Activated CD8-positive, alpha-beta T cell treated with anti-CD3 and anti-CD28 coated beads for 36 hours (primary cell): ENCODE measurements at regions of chr17 and their contacts with region 1.

Region 1: GRCh38 chr17:42677008-42677857 is 439 bp upstream of the PLEKHH3 start:
- DNase-seq: peak; percentile 100
- ATAC-seq: peak; percentile 83
- H3K4me3 Mint-ChIP-seq: peak overlapping the region; percentile 71
- H3K27ac Mint-ChIP-seq: peak overlapping the region; percentile 52
- H3K4me1 Mint-ChIP-seq: peaks cover 45% of the 10 kb centered on the region
- H3K27me3 Mint-ChIP-seq: peaks cover 42% of the 10 kb centered on the region
- CTCF ChIP-seq: no peak

Region 2: GRCh38 chr17:42660692-42661345 is 16.4 kb before region 1 on chr17:
- CTCF ChIA-PET with region 1: interaction called, 10 read pairs
- POLR2A ChIA-PET with region 1: interaction called, 3 read pairs
- intact Hi-C with region 1: no loop called
- DNase-seq: no peak
- ATAC-seq: no peak
- H3K4me3 Mint-ChIP-seq: no peak overlapping the region
- H3K27ac Mint-ChIP-seq: no peak overlapping the region
- H3K4me1 Mint-ChIP-seq: peaks cover 16% of the 10 kb centered on the region
- H3K27me3 Mint-ChIP-seq: no peaks in the 10 kb centered on the region
- CTCF ChIP-seq: no peak

Region 3: GRCh38 chr17:43104665-43105064 is 427.4 kb after region 1 on chr17:
- CTCF ChIA-PET with region 1: no interaction called
- POLR2A ChIA-PET with region 1: no interaction called
- intact Hi-C with region 1: no loop called
- DNase-seq: no peak
- ATAC-seq: no peak
- H3K4me3 Mint-ChIP-seq: no peak overlapping the region
- H3K27ac Mint-ChIP-seq: no peak overlapping the region
- H3K4me1 Mint-ChIP-seq: no peaks in the 10 kb centered on the region
- H3K27me3 Mint-ChIP-seq: no peaks in the 10 kb centered on the region
- CTCF ChIP-seq: no peak